ENCODE measurements at regions of chr7 and their contacts with region 1.

Region 1: GRCh38 chr7:82740246-82740848 is 296.8 kb upstream of the CACNA2D1 start:
- DNase-seq: peak; percentile 81
- H3K4me3 ChIP-seq: no peak overlapping the region
- H3K27ac ChIP-seq: no peak overlapping the region
- H3K4me1 ChIP-seq: no peaks in the 10 kb centered on the region
- H3K27me3 ChIP-seq: no peaks in the 10 kb centered on the region
- CTCF ChIP-seq: peak; percentile 85

Region 2: GRCh38 chr7:82714883-82715282 is 25.5 kb before region 1 on chr7:
- CTCF ChIA-PET with region 1: no interaction called
- POLR2A ChIA-PET with region 1: no interaction called
- intact Hi-C with region 1: no loop called
- DNase-seq: peak; percentile 17
- H3K4me3 ChIP-seq: no peak overlapping the region
- H3K27ac ChIP-seq: no peak overlapping the region
- H3K4me1 ChIP-seq: no peaks in the 10 kb centered on the region
- H3K27me3 ChIP-seq: no peaks in the 10 kb centered on the region
- CTCF ChIP-seq: no peak

Region 3: DNA sequence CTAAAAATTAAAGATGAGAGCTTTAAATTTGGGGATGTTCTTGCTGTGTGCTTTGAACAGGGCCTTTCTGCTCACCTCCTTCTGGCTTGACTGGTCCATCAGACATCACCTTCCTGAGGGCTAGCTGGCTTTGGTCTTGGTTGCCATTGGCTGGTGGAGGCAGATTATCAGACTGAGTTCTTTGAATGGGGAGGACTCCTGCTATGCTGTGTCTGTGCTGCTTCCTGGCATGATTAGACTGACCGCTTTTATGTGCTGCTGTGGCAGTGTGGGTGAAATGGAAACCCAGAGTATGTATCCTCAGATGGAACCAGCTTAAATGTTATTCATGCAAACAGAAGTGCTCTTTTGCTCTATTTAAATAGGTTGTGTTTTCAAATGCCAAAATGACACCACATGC is 80.7 kb after region 1 on chr7:
- CTCF ChIA-PET with region 1: no interaction called
- POLR2A ChIA-PET with region 1: no interaction called
- intact Hi-C with region 1: loop called (anchors 10 kb)
- DNase-seq: no peak
- H3K4me3 ChIP-seq: no peak overlapping the region
- H3K27ac ChIP-seq: no peak overlapping the region
- H3K4me1 ChIP-seq: peaks cover 5% of the 10 kb centered on the region
- H3K27me3 ChIP-seq: no peaks in the 10 kb centered on the region
- CTCF ChIP-seq: no peak

Region 4: DNA sequence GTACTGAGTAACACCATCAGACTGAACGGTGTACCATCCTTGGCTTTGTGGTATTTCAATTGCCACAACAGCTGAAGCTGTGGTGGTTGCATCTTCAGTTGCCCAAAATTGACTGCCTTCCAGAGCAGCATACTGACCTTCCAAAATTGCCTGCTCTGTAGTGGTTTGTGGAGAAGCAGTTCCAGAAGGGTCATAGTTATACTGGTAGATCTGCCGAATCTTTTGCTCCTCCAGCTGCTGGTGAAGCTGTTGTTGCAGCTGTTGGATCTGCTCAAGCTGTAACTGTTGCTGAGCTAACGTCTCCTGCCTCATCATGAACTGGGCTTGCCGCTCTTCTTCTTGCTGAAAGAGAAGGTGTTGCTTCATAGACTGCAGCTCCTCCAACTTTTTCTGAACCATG is 210.1 kb after region 1 on chr7:
- CTCF ChIA-PET with region 1: no interaction called
- POLR2A ChIA-PET with region 1: no interaction called
- intact Hi-C with region 1: loop called (anchors 10 kb)
- DNase-seq: no peak
- H3K4me3 ChIP-seq: no peak overlapping the region
- H3K27ac ChIP-seq: no peak overlapping the region
- H3K4me1 ChIP-seq: no peaks in the 10 kb centered on the region
- H3K27me3 ChIP-seq: peaks cover 4% of the 10 kb centered on the region
- CTCF ChIP-seq: no peak

Region 5: DNA sequence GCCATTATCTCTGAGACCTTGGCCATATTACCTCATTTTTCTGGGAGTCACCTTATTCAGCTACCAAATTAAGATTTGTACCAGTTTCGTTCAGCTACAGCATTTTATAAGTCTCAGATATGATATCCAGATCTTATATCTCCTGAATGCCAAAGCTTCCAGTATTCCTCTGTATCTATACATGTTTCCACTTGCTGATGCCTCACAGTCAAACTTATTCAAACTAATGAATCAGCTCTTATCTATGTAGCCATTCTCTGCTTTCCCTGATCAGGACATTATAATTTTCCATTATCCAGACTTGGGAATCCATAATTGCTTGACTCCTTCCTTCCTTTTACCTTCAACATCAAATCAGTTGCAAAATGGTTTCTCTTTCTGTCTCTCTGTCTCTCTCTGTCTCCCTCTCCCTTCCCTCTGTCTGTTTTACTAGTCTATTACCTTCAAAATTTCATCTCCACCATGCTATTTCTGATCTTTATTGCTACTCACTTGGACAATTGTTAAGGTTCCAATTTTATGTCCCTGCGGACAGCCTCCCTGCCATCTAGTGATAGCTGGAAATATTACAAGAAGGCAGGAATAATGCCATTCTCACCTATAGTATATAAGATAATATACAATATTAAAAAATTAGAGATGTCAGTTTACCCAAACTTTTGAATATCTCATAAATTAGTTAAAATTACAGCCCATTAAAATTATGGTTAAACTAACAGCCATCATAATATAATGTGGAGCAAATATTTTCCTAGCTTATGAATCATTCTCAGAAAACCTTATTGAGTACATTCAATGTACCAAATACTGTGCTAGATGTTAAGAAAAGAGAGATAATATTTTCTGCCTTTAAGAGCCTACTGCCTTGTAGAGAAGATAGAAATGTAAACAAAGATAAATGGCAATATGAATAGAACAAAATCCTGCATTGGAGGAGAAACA is 332.5 kb after region 1 on chr7:
- CTCF ChIA-PET with region 1: no interaction called
- POLR2A ChIA-PET with region 1: no interaction called
- intact Hi-C with region 1: loop called (anchors 10 kb)
- DNase-seq: peak; percentile 7
- H3K4me3 ChIP-seq: no peak overlapping the region
- H3K27ac ChIP-seq: no peak overlapping the region
- H3K4me1 ChIP-seq: no peaks in the 10 kb centered on the region
- H3K27me3 ChIP-seq: no peaks in the 10 kb centered on the region
- CTCF ChIP-seq: peak; percentile 58; the same call in 1 of the 2 replicates

Region 6: GRCh38 chr7:83271212-83272099 is 531.1 kb after region 1 on chr7:
- CTCF ChIA-PET with region 1: no interaction called
- POLR2A ChIA-PET with region 1: no interaction called
- intact Hi-C with region 1: loop called (anchors 1 kb)
- DNase-seq: peak; percentile 64
- H3K4me3 ChIP-seq: no peak overlapping the region
- H3K27ac ChIP-seq: no peak overlapping the region
- H3K4me1 ChIP-seq: no peaks in the 10 kb centered on the region
- H3K27me3 ChIP-seq: no peaks in the 10 kb centered on the region
- CTCF ChIP-seq: peak; percentile 58

Region 7: GRCh38 chr7:83365746-83366145 is 625.4 kb after region 1 on chr7:
- CTCF ChIA-PET with region 1: no interaction called
- POLR2A ChIA-PET with region 1: no interaction called
- intact Hi-C with region 1: loop called (anchors 2 kb)
- DNase-seq: peak; percentile 2
- H3K4me3 ChIP-seq: no peak overlapping the region
- H3K27ac ChIP-seq: no peak overlapping the region
- H3K4me1 ChIP-seq: no peaks in the 10 kb centered on the region
- H3K27me3 ChIP-seq: peaks cover 7% of the 10 kb centered on the region
- CTCF ChIP-seq: no peak; the same call in 1 of the 2 replicates

Region 8: GRCh38 chr7:83655951-83656556 is 915.7 kb after region 1 on chr7:
- CTCF ChIA-PET with region 1: no interaction called
- POLR2A ChIA-PET with region 1: no interaction called
- intact Hi-C with region 1: loop called (anchors 10 kb)
- DNase-seq: peak; percentile 54
- H3K4me3 ChIP-seq: no peak overlapping the region
- H3K27ac ChIP-seq: no peak overlapping the region
- H3K4me1 ChIP-seq: no peaks in the 10 kb centered on the region
- H3K27me3 ChIP-seq: peaks cover 35% of the 10 kb centered on the region
- CTCF ChIP-seq: peak; percentile 85

Measured in A673 (cell line).